ENCODE measurements at regions of chr3 and their contacts with region 1.

Region 1: DNA sequence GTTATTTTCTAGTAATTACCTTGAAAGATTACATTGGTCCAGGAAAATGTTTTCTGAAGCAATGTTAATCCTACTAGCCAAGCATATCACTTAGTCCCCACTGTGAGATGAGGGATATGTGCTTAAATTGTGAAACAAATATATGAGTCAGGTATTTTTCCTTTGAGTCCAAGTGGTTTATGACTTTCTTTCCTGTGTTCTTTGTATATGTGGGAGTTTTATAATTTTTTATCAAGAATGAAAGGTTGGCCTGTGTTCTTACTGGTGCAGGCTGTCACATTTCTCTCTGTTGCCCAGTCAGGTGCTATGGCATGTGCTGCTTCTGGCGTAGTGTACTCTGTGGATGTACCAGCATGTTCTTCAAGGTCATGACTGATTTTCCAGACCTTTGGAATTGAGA is 147.4 kb downstream of the CMSS1 start:
- DNase-seq: no peak
- ATAC-seq: no peak
- H3K4me3 ChIP-seq: no peak overlapping the region
- H3K27ac ChIP-seq: peak overlapping the region in 1 of 2 donors; percentile 98
- H3K4me1 ChIP-seq: peaks cover 7 to 8% of the 10 kb centered on the region in 2 donors
- H3K27me3 ChIP-seq: no peaks in the 10 kb centered on the region

Region 2: DNA sequence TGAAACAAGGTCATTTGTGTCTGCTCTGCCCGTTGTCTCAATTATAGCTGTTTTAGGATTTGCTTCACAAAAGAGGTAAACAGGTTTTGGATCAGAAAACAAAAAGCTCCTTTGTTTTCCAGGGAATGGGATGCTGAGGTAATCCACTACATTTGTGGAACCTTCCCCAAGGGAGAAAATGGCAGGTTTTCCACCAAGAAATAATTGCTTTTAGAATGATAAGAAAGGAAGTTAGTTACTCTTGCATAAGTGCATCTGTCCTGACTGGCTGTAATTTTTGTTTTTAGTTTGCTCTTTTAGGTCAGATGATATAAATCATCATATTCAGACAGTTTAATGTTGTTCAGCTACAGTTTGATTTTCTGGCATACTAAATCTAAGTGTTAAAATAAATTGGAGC is 525.2 kb before region 1 on chr3:
- intact Hi-C with region 1: no loop called
- DNase-seq: no peak
- ATAC-seq: no peak
- H3K4me3 ChIP-seq: no peak overlapping the region
- H3K27ac ChIP-seq: no peak overlapping the region
- H3K4me1 ChIP-seq: no peaks in the 10 kb centered on the region
- H3K27me3 ChIP-seq: no peaks in the 10 kb centered on the region

Region 3: GRCh38 chr3:99846462-99847160 is 118.5 kb before region 1 on chr3:
- intact Hi-C with region 1: no loop called
- DNase-seq: no peak
- ATAC-seq: peak; percentile 47
- H3K4me3 ChIP-seq: no peak overlapping the region
- H3K27ac ChIP-seq: no peak overlapping the region
- H3K4me1 ChIP-seq: peaks cover 2 to 3% of the 10 kb centered on the region in 2 donors
- H3K27me3 ChIP-seq: no peaks in the 10 kb centered on the region

Region 4: DNA sequence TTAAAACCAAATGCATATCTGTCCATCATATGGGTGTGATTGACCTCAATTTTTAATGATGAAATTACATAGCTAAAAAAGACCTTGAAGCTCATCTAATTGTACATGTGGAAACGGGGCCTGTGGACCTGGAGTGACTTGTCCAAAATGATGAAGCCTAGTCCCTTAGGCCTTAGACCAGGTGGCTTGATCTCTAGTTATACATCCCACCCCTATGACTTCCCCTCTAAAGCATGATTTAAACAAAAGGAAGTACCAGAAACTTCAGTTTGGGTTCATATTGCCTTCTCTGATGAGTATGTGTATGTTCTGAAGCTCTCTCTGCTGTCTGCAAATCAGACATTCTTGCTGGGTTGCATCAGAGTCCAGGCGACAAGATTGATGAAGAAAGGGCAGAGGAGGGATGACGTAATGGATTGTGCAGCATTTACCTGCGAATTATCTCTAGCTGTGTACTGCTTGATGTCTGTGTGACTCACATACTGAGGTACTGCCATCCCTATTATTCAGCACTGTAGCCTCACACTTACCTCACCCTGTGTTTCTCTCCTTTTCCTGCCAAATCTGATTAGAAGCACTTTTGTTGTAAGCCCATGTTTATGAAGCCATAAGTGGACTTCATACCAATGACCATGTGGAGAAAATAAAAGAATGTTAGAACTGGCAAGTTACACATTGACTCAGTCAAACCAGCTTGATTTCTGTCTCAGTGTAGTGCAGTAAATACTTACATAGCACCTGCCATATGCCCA is 37.7 kb after region 1 on chr3:
- intact Hi-C with region 1: loop called (anchors 5 kb)
- DNase-seq: no peak
- ATAC-seq: peak; percentile 13
- H3K4me3 ChIP-seq: no peak overlapping the region
- H3K27ac ChIP-seq: peak overlapping the region in 1 of 2 donors; percentile 43
- H3K4me1 ChIP-seq: peaks cover 2 to 8% of the 10 kb centered on the region in 2 donors
- H3K27me3 ChIP-seq: no peaks in the 10 kb centered on the region

Region 5: DNA sequence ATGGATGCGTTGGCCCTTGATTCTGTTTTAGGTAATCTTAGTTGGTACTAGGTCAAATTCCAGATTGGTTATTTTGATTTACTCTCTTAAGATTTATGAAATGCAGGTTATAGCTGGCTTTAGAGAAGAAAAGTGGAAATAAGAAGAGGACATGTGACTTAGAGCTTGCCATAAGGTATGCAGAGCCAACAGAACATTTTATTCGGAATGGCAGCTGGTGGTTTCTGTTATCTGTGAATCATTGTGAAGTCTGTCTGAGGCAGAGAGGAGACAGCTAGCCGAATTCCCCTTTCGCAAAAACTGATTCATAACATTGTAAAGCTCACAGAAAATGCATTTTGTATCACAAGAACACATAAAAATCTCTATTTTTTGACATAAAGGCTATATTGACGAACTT is 67.2 kb after region 1 on chr3:
- intact Hi-C with region 1: loop called in 1 of 2 experiments (anchors 5 kb)
- DNase-seq: no peak
- ATAC-seq: no peak
- H3K4me3 ChIP-seq: no peak overlapping the region
- H3K27ac ChIP-seq: no peak overlapping the region
- H3K4me1 ChIP-seq: peaks cover 0 to 10% of the 10 kb centered on the region in 2 donors
- H3K27me3 ChIP-seq: no peaks in the 10 kb centered on the region

Region 6: GRCh38 chr3:100561459-100562158 is 596.5 kb after region 1 on chr3:
- intact Hi-C with region 1: no loop called
- DNase-seq: no peak
- ATAC-seq: peak; percentile 41
- H3K4me3 ChIP-seq: no peak overlapping the region
- H3K27ac ChIP-seq: no peak overlapping the region
- H3K4me1 ChIP-seq: no peaks in the 10 kb centered on the region
- H3K27me3 ChIP-seq: no peaks in the 10 kb centered on the region